AG04450 (cell line): ENCODE measurements at regions of chr4 and their contacts with region 1.

Region 1: DNA sequence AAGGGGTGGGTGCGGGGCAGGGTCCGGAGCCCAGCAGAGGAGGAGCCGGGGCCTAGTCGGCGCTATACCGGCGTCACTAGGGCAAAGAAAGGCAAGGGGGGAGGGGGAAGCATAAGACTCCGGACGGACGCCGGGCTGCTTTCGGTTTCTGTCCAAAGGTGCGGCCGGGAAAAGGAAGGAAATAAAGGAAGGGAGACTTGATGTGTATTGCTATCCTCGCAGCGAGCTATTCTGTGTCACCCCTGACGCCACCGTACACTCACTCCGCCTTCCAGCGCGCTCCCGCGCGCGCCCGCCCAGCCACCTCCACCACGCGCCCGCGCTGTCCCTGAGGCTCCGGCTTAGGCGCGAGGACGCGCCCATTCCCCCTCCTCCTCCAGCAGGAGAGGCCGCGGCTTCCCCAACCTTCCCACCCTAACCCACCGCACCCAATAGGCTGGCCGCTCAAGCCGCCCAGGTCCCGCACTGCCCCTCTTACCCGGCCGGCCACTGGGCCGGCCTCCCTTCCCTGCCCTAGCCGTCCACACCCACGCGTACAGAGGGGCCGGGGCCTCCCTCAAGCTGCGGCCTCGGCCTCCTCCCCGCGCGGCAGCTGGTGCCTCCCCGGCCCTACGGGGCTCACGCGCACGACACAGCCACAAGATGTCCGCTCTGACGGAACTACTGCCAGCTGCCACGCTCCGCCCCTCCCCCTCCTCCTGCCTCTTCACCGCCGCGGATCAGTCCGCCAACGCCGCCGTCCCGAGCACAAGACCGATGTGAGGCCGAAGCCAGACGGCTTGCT is at the start of gene UBE2D3:
- DNase-seq: peak; percentile 95
- H3K4me3 ChIP-seq: peak within 1 kb of the TSS; percentile 92
- H3K27ac ChIP-seq: peak within 1 kb of the TSS; percentile 100
- H3K27me3 ChIP-seq: no peaks in the 10 kb centered on the region
- CTCF ChIP-seq: no peak
- polyA plus RNA-seq, gene UBE2D3: 381 and 534 TPM in 2 replicates

Region 2: GRCh38 chr4:102620697-102621497 is 206.2 kb before region 1 on chr4:
- CTCF ChIA-PET with region 1: interaction called, 9 read pairs
- POLR2A ChIA-PET with region 1: interaction called, 10 read pairs
- DNase-seq: peak; percentile 38
- H3K4me3 ChIP-seq: peak overlapping the region; percentile 3; the same call in 1 of the 2 replicates
- H3K27ac ChIP-seq: no peak overlapping the region
- H3K27me3 ChIP-seq: no peaks in the 10 kb centered on the region
- CTCF ChIP-seq: peak; percentile 71

Region 3: DNA sequence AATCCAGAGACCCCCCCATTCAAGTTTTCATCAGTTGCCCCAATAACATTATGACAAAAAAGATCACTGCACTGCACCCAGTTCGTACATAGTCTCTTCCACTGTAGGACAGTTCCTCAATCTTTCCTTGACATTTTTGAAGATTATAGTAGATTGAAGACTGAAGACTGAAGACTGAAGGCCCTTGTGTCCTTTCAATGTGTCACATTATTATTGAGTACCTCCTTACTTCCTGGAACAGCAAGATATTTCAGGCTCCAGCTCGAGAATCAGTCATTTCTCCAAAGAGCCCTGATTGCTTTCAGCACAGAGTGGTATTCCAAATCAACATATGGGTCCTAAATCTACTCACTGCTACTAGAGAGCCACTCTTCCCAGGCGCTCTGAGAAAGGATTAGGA is 141.3 kb before region 1 on chr4:
- CTCF ChIA-PET with region 1: no interaction called
- POLR2A ChIA-PET with region 1: no interaction called
- DNase-seq: no peak
- H3K4me3 ChIP-seq: no peak overlapping the region
- H3K27ac ChIP-seq: no peak overlapping the region
- H3K27me3 ChIP-seq: no peaks in the 10 kb centered on the region
- CTCF ChIP-seq: no peak

Region 4: GRCh38 chr4:102760645-102761295 is 66.3 kb before region 1 on chr4 and contains the start of gene MANBA:
- CTCF ChIA-PET with region 1: no interaction called
- POLR2A ChIA-PET with region 1: interaction called, 17 read pairs
- DNase-seq: no peak
- H3K4me3 ChIP-seq: peak within 1 kb of the TSS; percentile 92
- H3K27ac ChIP-seq: peak within 1 kb of the TSS; percentile 68
- H3K27me3 ChIP-seq: no peaks in the 10 kb centered on the region
- CTCF ChIP-seq: no peak
- polyA plus RNA-seq, gene MANBA: 20.9 and 21.9 TPM in 2 replicates

Region 5: GRCh38 chr4:102809190-102809589 is 17.9 kb before region 1 on chr4:
- CTCF ChIA-PET with region 1: interaction called, 4 read pairs
- POLR2A ChIA-PET with region 1: interaction called, 14 read pairs
- DNase-seq: no peak
- H3K4me3 ChIP-seq: no peak overlapping the region
- H3K27ac ChIP-seq: no peak overlapping the region
- H3K27me3 ChIP-seq: no peaks in the 10 kb centered on the region
- CTCF ChIP-seq: no peak

Region 6: DNA sequence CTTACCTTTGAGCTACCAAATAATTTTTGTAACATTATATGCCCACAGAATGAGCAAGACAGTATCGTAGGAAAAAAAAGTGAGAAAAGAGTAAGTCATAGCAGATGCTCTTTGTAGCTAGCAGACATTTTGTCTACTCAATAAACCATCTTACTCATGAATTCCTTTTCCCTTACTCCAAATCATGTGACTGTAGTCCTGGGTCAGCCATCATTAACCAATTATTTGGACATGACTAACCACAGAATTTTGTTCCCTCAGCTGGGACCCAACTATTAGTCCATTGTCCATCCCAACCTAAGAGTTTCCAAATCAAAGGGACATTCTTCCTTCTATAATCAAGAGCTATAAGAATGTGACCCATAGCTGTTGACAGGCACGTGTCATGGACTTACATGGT is 11.1 kb before region 1 on chr4:
- CTCF ChIA-PET with region 1: interaction called, 3 read pairs
- POLR2A ChIA-PET with region 1: interaction called, 29 read pairs
- DNase-seq: peak; percentile 73
- H3K4me3 ChIP-seq: no peak overlapping the region
- H3K27ac ChIP-seq: peak overlapping the region; percentile 65
- H3K27me3 ChIP-seq: no peaks in the 10 kb centered on the region
- CTCF ChIP-seq: no peak

Region 7: DNA sequence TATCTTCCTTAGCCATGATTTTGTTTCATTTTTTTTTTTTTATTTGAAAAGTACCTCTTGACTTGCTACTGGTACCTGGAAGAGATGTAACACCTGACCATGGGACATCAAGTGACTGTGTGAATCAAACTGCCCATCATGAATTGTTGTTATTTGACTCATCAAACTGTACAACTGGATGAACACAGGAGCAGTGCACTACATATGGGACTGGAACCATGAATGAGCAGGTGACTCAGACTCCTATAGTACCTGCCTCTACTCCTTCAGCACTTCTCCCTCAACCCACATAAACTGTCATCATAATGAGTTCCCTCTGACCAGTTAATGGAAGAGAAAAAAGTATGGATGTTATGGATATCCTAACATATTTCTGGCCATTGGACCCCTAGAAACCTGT is 16.2 kb after region 1 on chr4:
- CTCF ChIA-PET with region 1: no interaction called
- POLR2A ChIA-PET with region 1: no interaction called
- DNase-seq: no peak
- H3K4me3 ChIP-seq: no peak overlapping the region
- H3K27ac ChIP-seq: no peak overlapping the region
- H3K27me3 ChIP-seq: no peaks in the 10 kb centered on the region
- CTCF ChIP-seq: no peak

Region 8: GRCh38 chr4:102868781-102869568 is 41.9 kb after region 1 on chr4 and contains the start of gene CISD2:
- CTCF ChIA-PET with region 1: no interaction called
- POLR2A ChIA-PET with region 1: interaction called, 46 read pairs
- DNase-seq: peak; percentile 61
- H3K4me3 ChIP-seq: peak within 1 kb of the TSS; percentile 91
- H3K27ac ChIP-seq: peak within 1 kb of the TSS; percentile 87
- H3K27me3 ChIP-seq: no peaks in the 10 kb centered on the region
- CTCF ChIP-seq: no peak
- polyA plus RNA-seq, gene CISD2: 23.2 and 30.6 TPM in 2 replicates

Region 9: DNA sequence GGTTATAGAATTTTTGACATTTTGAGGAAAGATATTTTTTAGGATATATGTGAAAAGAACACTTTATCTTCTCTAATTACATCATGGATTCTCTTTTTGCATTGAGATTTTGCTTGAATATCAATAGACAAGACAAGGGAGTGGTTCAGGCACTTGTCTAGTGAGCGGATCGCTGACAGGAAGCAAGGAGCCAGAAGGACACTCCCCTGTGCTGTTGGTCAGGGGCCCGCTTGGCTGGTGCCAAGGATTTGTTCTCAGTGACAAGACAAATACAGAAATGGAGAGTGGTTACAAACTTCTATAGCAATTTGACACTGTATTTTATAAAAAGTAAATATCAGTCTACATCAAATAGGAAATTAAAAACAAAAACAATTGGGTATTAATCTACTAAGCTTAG is 132.4 kb after region 1 on chr4:
- CTCF ChIA-PET with region 1: no interaction called
- POLR2A ChIA-PET with region 1: no interaction called
- DNase-seq: no peak
- H3K4me3 ChIP-seq: no peak overlapping the region
- H3K27ac ChIP-seq: no peak overlapping the region
- H3K27me3 ChIP-seq: no peaks in the 10 kb centered on the region
- CTCF ChIP-seq: no peak